Naive thymus-derived CD8-positive, alpha-beta T cell (primary cell): ENCODE measurements at regions of chr21 and their contacts with region 1.

Region 1: DNA sequence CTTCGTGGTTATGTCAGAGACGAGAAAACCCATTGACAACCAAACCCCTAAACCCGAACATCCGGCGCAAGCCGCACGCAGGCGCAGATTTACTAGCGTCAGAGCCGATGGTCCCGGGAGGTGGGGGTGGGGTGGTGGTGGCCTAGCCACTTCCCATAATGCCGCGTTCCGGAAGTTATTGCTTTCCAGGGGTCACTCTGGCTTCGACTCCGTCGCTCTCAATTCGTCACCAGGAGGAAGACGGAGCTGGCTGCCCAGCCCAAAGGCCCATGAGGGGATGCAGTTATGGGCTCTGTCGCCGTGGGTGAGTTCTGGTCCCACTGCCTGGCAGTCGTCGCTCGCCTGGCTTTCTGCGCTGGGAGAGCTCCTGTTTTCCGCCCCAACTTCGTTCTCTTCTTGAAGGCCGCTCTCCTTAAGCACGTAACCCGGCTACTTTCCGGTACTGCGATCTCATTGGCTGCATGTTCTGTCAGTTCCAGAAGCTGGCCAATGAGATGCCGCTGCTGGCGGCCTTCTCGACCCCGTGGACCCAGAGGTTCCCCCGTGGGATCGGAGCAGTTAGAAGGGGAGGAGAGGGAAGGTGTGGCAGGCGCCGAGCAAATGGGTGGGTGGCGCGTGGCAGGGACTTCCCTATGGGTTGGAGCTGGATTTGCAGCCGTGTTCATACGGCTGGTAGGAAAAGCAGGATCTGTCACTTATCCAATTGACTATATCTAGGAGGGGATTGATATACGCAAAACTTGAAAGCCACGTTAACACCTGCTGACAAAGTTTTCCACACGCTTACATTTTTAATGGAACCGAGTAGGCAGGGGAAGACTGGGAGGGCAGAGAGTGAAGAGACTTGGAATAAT is at the start of gene USP16:
- DNase-seq: peak; percentile 82 to 99 (median 94)
- ATAC-seq: peak; percentile 90 to 93
- H3K4me3 Mint-ChIP-seq: peak within 1 kb of the TSS; percentile 94 to 99 (median 97)
- H3K27ac Mint-ChIP-seq: peak within 1 kb of the TSS; percentile 98 to 100 (median 100)
- H3K4me1 Mint-ChIP-seq: peaks cover 24 to 64% (median 56%) of the 10 kb centered on the region in 4 donors
- H3K27me3 Mint-ChIP-seq: peaks cover 0 to 1% (median 0%) of the 10 kb centered on the region in 5 donors
- polyA plus RNA-seq, gene USP16: 20.0 to 21.9 (median 20.6) TPM

Region 2: DNA sequence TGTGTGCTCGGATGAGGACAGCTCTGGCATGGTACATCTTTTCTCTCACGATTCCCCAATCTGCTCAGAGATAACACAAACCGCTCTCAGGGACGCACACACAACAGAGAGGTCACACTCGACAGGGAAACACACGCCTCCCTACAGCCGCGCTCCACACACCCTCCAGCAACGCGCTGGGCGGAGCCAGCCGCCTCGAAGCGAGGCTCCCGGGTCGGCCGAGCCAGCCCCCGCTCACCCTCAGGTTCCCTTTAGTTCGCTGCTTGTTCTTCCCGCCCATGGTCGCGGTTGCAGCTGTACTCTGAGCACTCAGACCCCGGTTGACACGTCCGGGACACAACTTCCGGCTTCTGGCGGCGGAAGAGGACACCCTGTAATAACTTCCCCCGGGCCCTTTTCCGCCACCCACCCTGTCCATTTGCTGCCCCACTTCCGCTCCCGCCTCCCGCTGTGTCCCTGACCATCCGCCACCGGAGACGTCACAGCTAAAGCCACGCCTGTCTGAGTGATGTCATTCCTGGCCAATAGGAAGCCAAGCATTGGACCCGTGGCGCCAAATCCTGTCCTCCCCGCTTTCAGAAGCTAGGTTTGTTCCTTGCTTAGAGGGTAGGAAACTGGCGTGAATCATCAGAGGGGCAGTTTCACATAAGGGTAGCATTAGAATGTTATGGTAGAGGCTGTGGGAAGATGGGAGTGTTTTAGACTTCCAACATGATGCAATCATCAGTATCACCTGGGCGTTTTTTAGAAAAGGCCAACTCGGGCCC is 32.0 kb before region 1 on chr21 and contains the start of gene LTN1:
- POLR2A ChIA-PET with region 1: interaction called, 130 read pairs
- DNase-seq: peak; percentile 92 to 99 (median 98)
- ATAC-seq: peak; percentile 91 to 92
- H3K4me3 Mint-ChIP-seq: peak within 1 kb of the TSS; percentile 92 to 99 (median 98)
- H3K27ac Mint-ChIP-seq: peak within 1 kb of the TSS; percentile 94 to 99 (median 98)
- H3K4me1 Mint-ChIP-seq: peaks cover 14 to 46% (median 38%) of the 10 kb centered on the region in 4 donors
- H3K27me3 Mint-ChIP-seq: no peaks in the 10 kb centered on the region
- polyA plus RNA-seq, gene LTN1: 12.0 to 14.1 (median 13.0) TPM

Region 3: DNA sequence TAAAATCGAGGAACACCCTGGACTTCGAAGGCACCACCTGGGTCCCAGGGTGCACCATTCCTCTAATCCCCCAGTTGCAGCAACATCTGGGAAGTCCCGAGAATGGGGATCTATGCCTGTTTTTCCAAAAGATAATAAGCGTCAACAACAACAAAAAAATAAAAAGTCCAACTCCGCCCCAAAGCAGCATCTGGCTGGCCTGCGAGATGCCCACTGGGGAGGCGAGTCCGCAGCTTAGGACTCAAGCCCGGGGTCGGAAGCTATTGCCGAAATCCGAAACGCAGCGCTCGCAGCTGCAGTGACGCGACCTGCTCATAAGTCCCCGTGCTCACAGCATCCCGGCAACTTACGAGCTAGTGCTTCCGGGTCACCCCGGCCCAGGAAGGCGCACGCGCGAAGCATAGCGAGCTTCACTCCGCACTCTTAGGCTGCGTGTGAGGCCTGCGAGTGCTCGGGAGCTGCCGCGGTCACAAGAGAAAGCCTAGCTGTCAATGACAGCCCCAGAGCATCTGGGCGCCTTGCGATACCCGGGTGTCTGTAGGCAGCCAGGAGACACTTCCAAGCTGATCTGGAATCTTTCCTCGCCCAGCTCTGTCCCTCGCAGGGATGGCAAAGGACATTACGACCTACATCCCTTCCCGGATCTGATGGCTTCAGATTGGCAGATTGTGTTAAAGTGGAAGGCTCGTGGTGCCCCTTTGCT is 22.1 kb before region 1 on chr21:
- POLR2A ChIA-PET with region 1: interaction called, 370 read pairs
- DNase-seq: peak; percentile 87 to 98 (median 94)
- ATAC-seq: peak; percentile 99 to 100
- H3K4me3 Mint-ChIP-seq: peak overlapping the region; percentile 84 to 96 (median 93)
- H3K27ac Mint-ChIP-seq: peak overlapping the region; percentile 97 to 99 (median 98)
- H3K4me1 Mint-ChIP-seq: peaks cover 1 to 24% (median 12%) of the 10 kb centered on the region in 4 donors
- H3K27me3 Mint-ChIP-seq: no peaks in the 10 kb centered on the region

Region 4: DNA sequence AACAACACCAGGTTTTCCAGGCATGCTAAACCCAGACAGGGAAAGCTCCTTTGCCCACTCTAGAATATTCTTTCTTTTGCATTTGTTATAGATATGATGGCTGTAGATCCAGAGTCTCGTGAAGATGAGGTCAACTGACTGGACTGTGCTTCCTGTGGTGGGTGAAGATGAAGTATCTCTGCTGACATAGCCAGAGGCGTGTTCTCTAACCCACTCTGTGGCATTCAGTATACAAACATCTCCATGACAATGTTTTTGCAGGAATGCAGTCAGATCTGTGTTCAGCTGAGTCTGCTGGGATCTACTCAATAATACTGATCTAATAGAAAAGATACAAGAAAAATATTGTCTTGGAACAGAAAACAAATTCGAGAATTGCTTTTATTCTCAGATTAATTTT is 16.9 kb before region 1 on chr21:
- POLR2A ChIA-PET with region 1: interaction called, 370 read pairs
- DNase-seq: no peak
- ATAC-seq: no peak
- H3K4me3 Mint-ChIP-seq: no peak overlapping the region
- H3K27ac Mint-ChIP-seq: no peak overlapping the region
- H3K4me1 Mint-ChIP-seq: peaks cover 0 to 11% (median 6%) of the 10 kb centered on the region in 4 donors
- H3K27me3 Mint-ChIP-seq: no peaks in the 10 kb centered on the region

Region 5: DNA sequence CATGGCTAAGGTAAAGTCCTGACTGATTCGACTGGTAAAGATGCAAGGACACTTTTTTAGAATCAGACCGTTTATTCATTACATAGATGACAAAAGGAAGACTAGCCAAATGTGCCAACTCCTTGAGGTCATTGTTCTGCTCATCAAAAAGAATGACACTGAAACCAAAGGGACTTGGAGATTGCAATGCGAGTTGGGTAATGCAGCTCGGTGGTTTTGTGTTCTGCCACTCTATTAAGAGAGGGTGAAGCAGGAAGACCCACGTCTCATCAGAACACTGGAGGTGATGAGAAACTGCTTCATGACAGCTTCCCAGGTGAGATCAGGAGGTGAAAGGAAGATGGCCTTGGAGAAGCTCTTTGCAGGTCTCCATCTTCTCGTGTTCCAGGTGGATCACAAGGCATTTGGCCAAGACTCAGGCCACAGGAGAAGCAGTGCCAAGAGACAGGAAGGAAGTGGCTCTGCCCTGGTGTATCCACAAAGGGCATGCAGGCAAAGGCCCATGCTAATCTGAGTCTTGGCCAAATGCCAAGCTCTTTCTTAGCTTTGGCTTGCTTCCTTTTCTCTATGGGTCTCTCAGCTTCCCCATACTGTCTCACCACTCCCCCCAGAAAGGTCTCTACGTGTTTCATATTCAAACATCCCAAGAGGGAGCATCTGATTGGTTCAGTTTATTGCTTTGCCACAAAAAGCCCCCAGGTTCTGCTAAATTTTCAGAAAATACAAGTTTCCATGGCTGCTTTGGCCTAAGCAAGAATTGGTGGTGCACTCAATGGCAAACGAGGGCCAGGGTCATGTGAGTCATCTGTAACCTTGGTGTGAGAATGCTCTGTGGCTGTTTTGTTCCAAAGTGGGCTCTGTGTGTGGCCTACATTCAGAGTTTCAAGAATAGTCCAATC is 54.4 kb after region 1 on chr21:
- POLR2A ChIA-PET with region 1: interaction called, 69 read pairs
- DNase-seq: peak in 7 of 10 donors; percentile 35 to 67 (median 46)
- ATAC-seq: peak; percentile 22 to 47
- H3K4me3 Mint-ChIP-seq: peak overlapping the region; percentile 29 to 92 (median 68)
- H3K27ac Mint-ChIP-seq: peak overlapping the region; percentile 78 to 96 (median 94)
- H3K4me1 Mint-ChIP-seq: peaks cover 27 to 74% (median 70%) of the 10 kb centered on the region in 4 donors
- H3K27me3 Mint-ChIP-seq: no peaks in the 10 kb centered on the region

Region 6: GRCh38 chr21:29104239-29104708 is 79.6 kb after region 1 on chr21:
- POLR2A ChIA-PET with region 1: no interaction called
- DNase-seq: no peak
- ATAC-seq: no peak
- H3K4me3 Mint-ChIP-seq: no peak overlapping the region
- H3K27ac Mint-ChIP-seq: no peak overlapping the region
- H3K4me1 Mint-ChIP-seq: peaks cover 0 to 1% (median 0%) of the 10 kb centered on the region in 4 donors
- H3K27me3 Mint-ChIP-seq: no peaks in the 10 kb centered on the region

Region 7: DNA sequence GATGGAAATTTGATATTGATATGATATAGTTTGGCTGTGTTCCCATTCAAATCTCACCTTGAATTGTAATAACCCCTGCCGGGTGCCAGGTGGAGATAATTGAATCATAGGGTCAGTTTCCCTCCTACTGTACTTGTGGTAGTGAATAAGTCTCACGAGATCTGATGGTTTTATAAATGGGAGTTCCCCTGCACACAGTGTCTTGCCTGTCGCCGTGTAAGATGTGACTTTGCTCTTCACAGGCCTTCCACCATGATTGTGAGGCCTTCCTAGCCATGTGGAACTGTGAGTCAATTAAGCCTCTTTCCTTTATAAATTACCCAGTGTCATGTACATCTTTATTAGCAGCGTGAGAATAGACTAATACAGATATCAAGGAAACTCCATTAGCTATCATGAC is 180.3 kb after region 1 on chr21:
- POLR2A ChIA-PET with region 1: no interaction called
- DNase-seq: no peak
- ATAC-seq: no peak
- H3K4me3 Mint-ChIP-seq: no peak overlapping the region
- H3K27ac Mint-ChIP-seq: no peak overlapping the region
- H3K4me1 Mint-ChIP-seq: peaks cover 0 to 16% (median 0%) of the 10 kb centered on the region in 4 donors
- H3K27me3 Mint-ChIP-seq: peaks cover 0 to 3% (median 0%) of the 10 kb centered on the region in 5 donors